Ovary (tissue), 10 donors: ENCODE measurements at regions of chr17 and their contacts with region 1.

Region 1: DNA sequence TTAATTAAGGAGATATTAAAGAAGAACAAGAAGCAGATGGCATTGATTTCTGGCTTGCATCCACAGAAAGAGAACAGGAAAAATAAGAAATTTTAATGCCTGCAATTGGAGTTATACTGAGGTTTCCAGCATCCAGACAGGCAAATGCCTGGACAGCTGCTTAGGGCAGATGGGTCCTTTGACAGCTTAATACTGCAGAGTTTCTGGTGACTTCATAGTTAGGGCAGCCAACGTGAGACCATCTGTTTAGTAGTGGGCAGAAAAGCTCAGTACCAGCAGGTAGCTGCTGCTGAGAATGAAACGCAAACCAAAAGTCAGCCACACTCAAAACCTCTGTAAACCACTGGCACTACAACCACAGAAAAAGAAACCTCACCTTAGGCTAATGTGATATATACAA is 109.8 kb downstream of the CDK5R1 start:
- DNase-seq: no peak
- H3K4me3 ChIP-seq: no peak overlapping the region
- H3K27ac ChIP-seq: no peak overlapping the region
- H3K4me1 ChIP-seq: no peaks in the 10 kb centered on the region
- H3K27me3 ChIP-seq: no peaks in the 10 kb centered on the region
- CTCF ChIP-seq: no peak
- EP300 ChIP-seq: no peak
- POLR2A ChIP-seq: no peak

Region 2: GRCh38 chr17:31369266-31369665 is 1227.4 kb before region 1 on chr17:
- intact Hi-C with region 1: loop called in 1 of 4 experiments (anchors 5 kb)
- DNase-seq: no peak
- H3K4me3 ChIP-seq: no peak overlapping the region
- H3K27ac ChIP-seq: no peak overlapping the region
- H3K4me1 ChIP-seq: no peaks in the 10 kb centered on the region
- H3K27me3 ChIP-seq: no peaks in the 10 kb centered on the region
- CTCF ChIP-seq: no peak
- EP300 ChIP-seq: no peak
- POLR2A ChIP-seq: no peak

Region 3: GRCh38 chr17:33292184-33292980 is 695.8 kb after region 1 on chr17:
- intact Hi-C with region 1: no loop called
- DNase-seq: peak in 2 of 5 donors; percentile 39 to 42
- H3K4me3 ChIP-seq: peak overlapping the region; percentile 12
- H3K27ac ChIP-seq: no peak overlapping the region
- H3K4me1 ChIP-seq: peaks cover 6% of the 10 kb centered on the region
- H3K27me3 ChIP-seq: no peaks in the 10 kb centered on the region
- CTCF ChIP-seq: no peak
- EP300 ChIP-seq: no peak
- POLR2A ChIP-seq: no peak